ENCODE measurements at regions of chr22 and their contacts with region 1.

Region 1: GRCh38 chr22:31345331-31346254 is 553 bp downstream of the PATZ1 start:
- DNase-seq: peak; percentile 84 to 93 (median 88)
- ATAC-seq: peak in 3 of 4 donors; percentile 64 to 69 (median 66)
- H3K4me3 ChIP-seq: peak overlapping the region; percentile 61 to 99 (median 74)
- H3K27ac ChIP-seq: peak overlapping the region; percentile 67 to 96 (median 90)
- H3K4me1 ChIP-seq: peaks cover 5 to 56% (median 38%) of the 10 kb centered on the region in 12 donors
- H3K27me3 ChIP-seq: no peaks in the 10 kb centered on the region
- CTCF ChIP-seq: peak; percentile 67 to 93 (median 82)
- POLR2A ChIP-seq: no peak

Region 2: GRCh38 chr22:31295831-31296657 is 49.5 kb before region 1 on chr22:
- intact Hi-C with region 1: loop called in 1 of 10 experiments (anchors 2 kb)
- DNase-seq: no peak
- ATAC-seq: no peak
- H3K4me3 ChIP-seq: peak overlapping the region in 2 of 12 donors; percentile 1 to 15
- H3K27ac ChIP-seq: peak overlapping the region in 11 of 12 donors; percentile 0 to 80 (median 58)
- H3K4me1 ChIP-seq: peaks cover 2 to 54% (median 33%) of the 10 kb centered on the region in 12 donors
- H3K27me3 ChIP-seq: no peaks in the 10 kb centered on the region
- CTCF ChIP-seq: no peak
- POLR2A ChIP-seq: no peak

Region 3: GRCh38 chr22:31363885-31364465 is 18.4 kb after region 1 on chr22:
- intact Hi-C with region 1: no loop called
- DNase-seq: no peak
- ATAC-seq: no peak
- H3K4me3 ChIP-seq: no peak overlapping the region
- H3K27ac ChIP-seq: no peak overlapping the region
- H3K4me1 ChIP-seq: no peaks in the 10 kb centered on the region
- H3K27me3 ChIP-seq: no peaks in the 10 kb centered on the region
- CTCF ChIP-seq: no peak
- POLR2A ChIP-seq: no peak

Region 4: GRCh38 chr22:31399211-31400028 is 53.8 kb after region 1 on chr22 and contains the start of gene DRG1:
- intact Hi-C with region 1: loop called (anchors 1 to 5 kb)
- DNase-seq: peak; percentile 98 to 99 (median 99)
- ATAC-seq: peak; percentile 99 to 100 (median 100)
- H3K4me3 ChIP-seq: peak within 1 kb of the TSS; percentile 47 to 99 (median 81)
- H3K27ac ChIP-seq: peak within 1 kb of the TSS; percentile 47 to 93 (median 89)
- H3K4me1 ChIP-seq: peaks cover 3 to 22% (median 13%) of the 10 kb centered on the region in 12 donors
- H3K27me3 ChIP-seq: no peaks in the 10 kb centered on the region
- CTCF ChIP-seq: peak in 2 of 12 donors; percentile 11 to 17
- POLR2A ChIP-seq: peak; percentile 80 to 99
- total RNA-seq, gene DRG1: 50.1 to 88.0 (median 55.3) TPM

Region 5: GRCh38 chr22:31489604-31490495 is 144.3 kb after region 1 on chr22 and contains the start of gene EIF4ENIF1:
- intact Hi-C with region 1: loop called in 3 of 10 experiments (anchors 5 to 10 kb)
- DNase-seq: peak; percentile 91 to 94 (median 92)
- ATAC-seq: peak; percentile 87 to 97 (median 96)
- H3K4me3 ChIP-seq: peak within 1 kb of the TSS; percentile 56 to 98 (median 84)
- H3K27ac ChIP-seq: peak within 1 kb of the TSS; percentile 91 to 99 (median 96)
- H3K4me1 ChIP-seq: peaks cover under 1 to 42% (median 21%) of the 10 kb centered on the region in 12 donors
- H3K27me3 ChIP-seq: no peaks in the 10 kb centered on the region
- CTCF ChIP-seq: no peak
- POLR2A ChIP-seq: peak in 1 of 2 donors; percentile 75
- total RNA-seq, gene EIF4ENIF1: 12.1 to 31.2 (median 23.8) TPM

Region 6: GRCh38 chr22:31496007-31496734 is 150.6 kb after region 1 on chr22 and contains the start of gene SFI1:
- intact Hi-C with region 1: loop called in 2 of 10 experiments (anchors 5 to 10 kb)
- DNase-seq: peak; percentile 92 to 96 (median 93)
- ATAC-seq: peak; percentile 92 to 98 (median 97)
- H3K4me3 ChIP-seq: peak within 1 kb of the TSS; percentile 53 to 95 (median 84)
- H3K27ac ChIP-seq: peak within 1 kb of the TSS in 11 of 12 donors; percentile 65 to 93 (median 83)
- H3K4me1 ChIP-seq: peaks cover 2 to 28% (median 13%) of the 10 kb centered on the region in 12 donors
- H3K27me3 ChIP-seq: no peaks in the 10 kb centered on the region
- CTCF ChIP-seq: peak in 9 of 12 donors; percentile 14 to 59 (median 37)
- POLR2A ChIP-seq: peak in 1 of 2 donors; percentile 52
- total RNA-seq, gene SFI1: 2.2 to 18.3 (median 6.4) TPM

Region 7: DNA sequence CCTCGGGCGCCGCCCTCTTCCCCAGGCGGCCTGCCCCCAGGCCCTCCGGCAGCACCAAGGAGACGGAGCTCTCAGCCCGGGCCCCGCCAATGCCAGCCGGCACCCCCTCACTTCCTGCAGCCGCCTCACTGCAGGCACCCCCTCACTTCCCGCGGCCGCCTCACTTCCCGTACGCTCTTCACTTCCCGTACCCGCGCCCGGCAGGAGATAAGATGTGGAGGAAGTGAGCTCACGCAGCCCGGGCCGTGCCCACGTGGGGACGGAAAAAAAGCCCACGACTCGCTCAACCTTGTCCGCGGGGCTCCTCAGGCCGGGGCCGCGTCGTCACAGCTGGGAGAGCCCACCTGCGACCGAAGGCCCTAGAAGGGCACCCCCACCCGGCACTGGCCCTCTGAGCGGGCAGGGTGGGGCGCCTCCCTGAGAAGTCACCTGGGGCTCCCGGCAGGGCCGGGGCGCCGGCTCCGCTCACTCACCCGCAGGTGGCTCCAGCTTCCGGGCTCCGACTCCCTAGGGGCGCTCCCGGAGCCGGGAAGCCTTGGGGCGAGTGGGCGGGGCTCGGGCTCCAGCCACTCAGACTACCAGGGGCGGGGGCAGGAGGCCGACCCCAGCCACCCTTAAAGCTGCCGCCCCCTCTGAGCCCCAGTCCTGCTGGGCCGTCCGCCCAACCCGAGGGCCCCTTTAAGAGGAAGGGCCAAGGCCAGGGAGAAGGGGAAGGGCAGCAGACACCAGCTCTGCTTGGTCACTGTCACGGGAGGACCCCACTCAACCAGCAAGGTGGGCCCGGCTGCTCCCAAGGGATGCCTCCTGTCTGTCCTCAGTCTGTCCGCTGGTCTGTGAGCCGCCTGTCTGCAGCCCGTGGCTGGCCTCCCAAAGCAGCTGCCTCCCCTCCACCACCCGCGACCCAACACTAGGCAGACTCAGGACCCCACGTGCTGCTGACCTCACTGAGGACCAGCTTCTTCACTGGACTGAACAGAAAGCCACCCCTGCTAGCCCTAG is 285.0 kb after region 1 on chr22:
- intact Hi-C with region 1: loop called in 7 of 10 experiments (anchors 2 to 10 kb)
- DNase-seq: peak; percentile 87 to 90 (median 88)
- ATAC-seq: peak; percentile 43 to 88 (median 87)
- H3K4me3 ChIP-seq: peak overlapping the region; percentile 63 to 95 (median 84)
- H3K27ac ChIP-seq: peak overlapping the region; percentile 81 to 98 (median 91)
- H3K4me1 ChIP-seq: peaks cover 3 to 64% (median 43%) of the 10 kb centered on the region in 12 donors
- H3K27me3 ChIP-seq: no peaks in the 10 kb centered on the region
- CTCF ChIP-seq: no peak
- POLR2A ChIP-seq: peak in 1 of 2 donors; percentile 23

Region 8: GRCh38 chr22:31749636-31750364 is 404.2 kb after region 1 on chr22 and contains the start of gene PRR14L:
- intact Hi-C with region 1: loop called in 1 of 10 experiments (anchors 5 kb)
- DNase-seq: peak; percentile 98 to 99 (median 99)
- ATAC-seq: peak; percentile 89 to 95 (median 94)
- H3K4me3 ChIP-seq: peak within 1 kb of the TSS; percentile 62 to 100 (median 86)
- H3K27ac ChIP-seq: peak within 1 kb of the TSS; percentile 73 to 95 (median 89)
- H3K4me1 ChIP-seq: peaks cover 3 to 54% (median 44%) of the 10 kb centered on the region in 12 donors
- H3K27me3 ChIP-seq: no peaks in the 10 kb centered on the region
- CTCF ChIP-seq: peak in 4 of 12 donors; percentile 12 to 24 (median 18)
- POLR2A ChIP-seq: peak in 1 of 2 donors; percentile 84
- total RNA-seq, gene PRR14L: 6.6 to 29.1 (median 15.1) TPM